A549 (cell line): ENCODE measurements at regions of chr9 and their contacts with region 1.

Region 1: GRCh38 chr9:97921959-97922724 is at the start of gene TRMO:
- DNase-seq: peak; percentile 90 to 99
- ATAC-seq: peak; percentile 91 to 92
- H3K4me3 ChIP-seq: peak within 1 kb of the TSS; percentile 55
- H3K27ac ChIP-seq: peak within 1 kb of the TSS; percentile 94 to 95
- H3K4me1 ChIP-seq: 0 out of 3 replicates have a peak, but pooled peaks cover 5% of the 10 kb centered on the region
- CTCF ChIP-seq: peak; percentile 70
- EP300 ChIP-seq: no peak
- POLR2A ChIP-seq: peak; percentile 85
- RAD21 ChIP-seq: peak in 1 of 2 experiments; percentile 45; a peak in 3 of 5 replicates
- polyA plus RNA-seq, gene TRMO: 18.8 and 19.4 TPM in 2 replicates

Region 2: DNA sequence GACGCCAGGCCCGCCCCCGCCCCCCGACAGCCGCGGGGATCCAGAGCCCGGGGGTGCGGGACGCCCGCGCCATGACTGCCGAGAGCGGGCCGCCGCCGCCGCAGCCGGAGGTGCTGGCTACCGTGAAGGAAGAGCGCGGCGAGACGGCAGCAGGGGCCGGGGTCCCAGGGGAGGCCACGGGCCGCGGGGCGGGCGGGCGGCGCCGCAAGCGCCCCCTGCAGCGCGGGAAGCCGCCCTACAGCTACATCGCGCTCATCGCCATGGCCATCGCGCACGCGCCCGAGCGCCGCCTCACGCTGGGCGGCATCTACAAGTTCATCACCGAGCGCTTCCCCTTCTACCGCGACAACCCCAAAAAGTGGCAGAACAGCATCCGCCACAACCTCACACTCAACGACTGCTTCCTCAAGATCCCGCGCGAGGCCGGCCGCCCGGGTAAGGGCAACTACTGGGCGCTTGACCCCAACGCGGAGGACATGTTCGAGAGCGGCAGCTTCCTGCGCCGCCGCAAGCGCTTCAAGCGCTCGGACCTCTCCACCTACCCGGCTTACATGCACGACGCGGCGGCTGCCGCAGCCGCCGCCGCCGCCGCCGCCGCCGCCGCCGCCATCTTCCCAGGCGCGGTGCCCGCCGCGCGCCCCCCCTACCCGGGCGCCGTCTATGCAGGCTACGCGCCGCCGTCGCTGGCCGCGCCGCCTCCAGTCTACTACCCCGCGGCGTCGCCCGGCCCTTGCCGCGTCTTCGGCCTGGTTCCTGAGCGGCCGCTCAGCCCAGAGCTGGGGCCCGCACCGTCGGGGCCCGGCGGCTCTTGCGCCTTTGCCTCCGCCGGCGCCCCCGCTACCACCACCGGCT is 68.1 kb before region 1 on chr9:
- CTCF ChIA-PET with region 1: no interaction called
- POLR2A ChIA-PET with region 1: interaction called, 11 read pairs
- DNase-seq: peak; percentile 41 to 87
- ATAC-seq: peak; percentile 87 to 92
- H3K4me3 ChIP-seq: peak overlapping the region; percentile 74
- H3K27ac ChIP-seq: peak overlapping the region; percentile 96 to 98
- H3K4me1 ChIP-seq: peaks cover 28% of the 10 kb centered on the region
- CTCF ChIP-seq: peak; percentile 75
- EP300 ChIP-seq: no peak
- POLR2A ChIP-seq: peak; percentile 77
- RAD21 ChIP-seq: peak; percentile 17 to 65; a peak in 4 of 5 replicates

Region 3: DNA sequence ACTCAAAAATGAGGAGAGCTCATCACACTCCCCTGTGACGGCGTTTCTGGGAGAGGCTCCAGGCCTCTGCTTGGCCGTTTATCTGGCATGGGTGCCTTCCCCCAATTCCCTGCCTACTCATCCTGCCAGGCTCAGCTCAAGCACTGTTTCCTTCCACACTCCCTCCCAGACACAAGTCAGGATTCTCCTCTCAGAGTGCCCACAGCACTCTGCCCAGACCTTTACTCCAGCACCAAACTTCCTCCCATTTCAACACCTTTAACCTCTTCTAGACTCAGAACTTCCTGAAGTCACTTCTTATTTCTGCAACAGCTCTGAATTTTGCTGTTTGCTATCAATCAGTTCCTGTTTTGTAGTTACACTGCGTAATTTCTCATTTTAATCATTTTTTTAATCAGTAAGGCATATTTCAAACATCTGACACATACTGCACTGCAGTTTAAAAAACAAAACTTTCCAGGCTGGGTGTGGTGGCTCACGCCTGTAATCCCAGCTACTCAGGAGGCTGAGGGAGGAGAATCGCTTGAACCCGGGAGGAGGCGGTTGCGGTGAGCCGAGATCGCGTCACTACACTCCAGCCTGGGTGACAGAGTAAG is 15.8 kb before region 1 on chr9:
- CTCF ChIA-PET with region 1: interaction called, 51 read pairs
- POLR2A ChIA-PET with region 1: interaction called, 5 read pairs
- DNase-seq: no peak
- ATAC-seq: no peak
- H3K4me3 ChIP-seq: no peak overlapping the region
- H3K27ac ChIP-seq: no peak overlapping the region
- H3K4me1 ChIP-seq: no peaks in the 10 kb centered on the region
- CTCF ChIP-seq: no peak
- EP300 ChIP-seq: no peak
- POLR2A ChIP-seq: no peak
- RAD21 ChIP-seq: no peak

Region 4: DNA sequence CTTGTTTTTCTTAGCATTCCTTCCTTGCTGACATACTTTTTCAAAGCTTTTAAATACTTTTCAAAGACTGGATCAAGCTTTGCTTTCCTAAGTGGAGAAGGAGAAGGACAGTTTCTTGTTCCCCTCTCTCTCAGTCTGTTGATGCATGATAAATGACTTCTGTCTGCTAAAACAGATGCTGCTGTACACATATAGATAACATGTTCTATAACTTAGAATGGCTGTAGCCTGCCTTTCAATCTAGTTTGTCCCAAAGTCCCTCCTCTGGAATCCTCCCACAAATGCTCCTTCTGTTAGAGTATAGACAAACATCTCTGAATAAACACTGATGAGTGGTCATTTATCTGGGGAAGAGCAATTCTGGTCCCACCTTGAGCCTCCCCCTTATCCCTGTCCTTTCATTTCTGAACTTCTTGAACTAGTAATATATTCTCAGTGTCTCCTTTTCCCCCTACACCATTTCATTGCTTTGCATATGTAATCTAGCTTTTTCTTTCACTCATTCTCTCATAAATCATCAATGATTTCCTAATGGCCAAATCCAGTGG is 21.2 kb after region 1 on chr9:
- CTCF ChIA-PET with region 1: interaction called, 46 read pairs
- POLR2A ChIA-PET with region 1: interaction called, 3 read pairs
- DNase-seq: no peak
- ATAC-seq: no peak
- H3K4me3 ChIP-seq: no peak overlapping the region
- H3K27ac ChIP-seq: no peak overlapping the region
- H3K4me1 ChIP-seq: no peaks in the 10 kb centered on the region
- CTCF ChIP-seq: no peak
- EP300 ChIP-seq: no peak
- POLR2A ChIP-seq: no peak
- RAD21 ChIP-seq: no peak

Region 5: GRCh38 chr9:97966493-97966892 is 44.4 kb after region 1 on chr9:
- CTCF ChIA-PET with region 1: interaction called, 17 read pairs
- POLR2A ChIA-PET with region 1: interaction called, 4 read pairs
- DNase-seq: no peak
- ATAC-seq: no peak
- H3K4me3 ChIP-seq: no peak overlapping the region
- H3K27ac ChIP-seq: no peak overlapping the region
- H3K4me1 ChIP-seq: no peaks in the 10 kb centered on the region
- CTCF ChIP-seq: no peak
- EP300 ChIP-seq: no peak
- POLR2A ChIP-seq: no peak
- RAD21 ChIP-seq: no peak

Region 6: DNA sequence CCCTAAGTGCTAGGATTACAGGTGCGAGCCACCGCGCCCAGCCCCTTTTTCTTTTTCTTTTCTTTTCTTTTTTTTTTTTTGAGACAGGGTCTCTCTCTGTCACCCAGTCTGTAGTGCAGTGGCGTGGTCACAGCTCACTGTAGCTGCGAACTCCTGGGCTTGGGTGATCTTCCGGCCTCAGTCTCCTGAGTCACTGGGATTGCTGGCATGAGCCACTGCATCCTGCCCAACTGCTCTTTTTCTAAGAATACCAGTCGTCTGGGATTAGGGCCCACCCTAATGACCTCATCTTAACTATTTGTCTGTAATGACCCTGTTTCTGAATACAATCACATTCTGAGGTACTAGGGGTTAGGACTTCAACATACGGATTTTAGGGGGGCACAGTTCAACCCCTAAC is 100.3 kb after region 1 on chr9:
- CTCF ChIA-PET with region 1: interaction called, 32 read pairs
- POLR2A ChIA-PET with region 1: no interaction called
- DNase-seq: no peak
- ATAC-seq: no peak
- H3K4me3 ChIP-seq: no peak overlapping the region
- H3K27ac ChIP-seq: no peak overlapping the region
- H3K4me1 ChIP-seq: no peaks in the 10 kb centered on the region
- CTCF ChIP-seq: no peak
- EP300 ChIP-seq: no peak
- POLR2A ChIP-seq: no peak
- RAD21 ChIP-seq: no peak

Region 7: GRCh38 chr9:98255578-98256296 is 333.6 kb after region 1 on chr9 and contains the start of gene TBC1D2:
- CTCF ChIA-PET with region 1: interaction called, 4 read pairs
- POLR2A ChIA-PET with region 1: interaction called, 10 read pairs
- DNase-seq: peak; percentile 92 to 94
- ATAC-seq: peak; percentile 85 to 94
- H3K4me3 ChIP-seq: peak within 1 kb of the TSS; percentile 79
- H3K27ac ChIP-seq: peak within 1 kb of the TSS; percentile 86 to 90
- H3K4me1 ChIP-seq: peaks cover 45% of the 10 kb centered on the region
- CTCF ChIP-seq: no peak
- EP300 ChIP-seq: no peak
- POLR2A ChIP-seq: peak; percentile 83
- RAD21 ChIP-seq: no peak
- polyA plus RNA-seq, gene TBC1D2: 3.3 and 4.1 TPM in 2 replicates